Activated T-helper 2 cell treated with anti-CD3 and anti-CD28 coated beads, Interferon-gamma antibody, Interleukin-2, Interleukin-4, amounts not matched to agents 10 μg/mL and 5 μg/mL and 100 μg/mL, durations not matched to agents 14 hours and 24 hours and 36 hours (primary cell): ENCODE measurements at regions of chr6 and their contacts with region 1.

Region 1: DNA sequence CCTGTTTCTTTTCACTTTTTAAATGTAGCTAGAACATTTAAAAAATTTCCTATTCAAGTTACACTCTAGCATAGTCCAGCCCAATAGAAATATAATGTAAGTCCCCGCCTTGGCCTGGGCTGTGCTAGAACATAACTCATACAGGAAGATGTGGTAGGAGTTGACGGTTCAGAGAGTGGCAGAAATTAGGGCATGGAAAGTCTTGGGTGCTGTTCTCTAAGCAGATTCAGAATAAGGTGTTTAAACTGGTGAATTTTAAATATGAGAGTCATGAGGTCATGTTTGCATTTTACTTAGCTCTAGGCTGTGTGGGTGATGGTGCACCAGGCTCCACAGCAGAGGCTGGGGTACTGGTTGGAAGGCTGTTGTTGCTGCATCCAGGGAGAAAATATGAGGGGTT is 256.5 kb downstream of the FARS2 start:
- DNase-seq: no peak
- H3K4me3 Mint-ChIP-seq: peak overlapping the region; percentile 48
- H3K27ac Mint-ChIP-seq: peak overlapping the region; percentile 76
- H3K4me1 Mint-ChIP-seq: peaks cover 48% of the 10 kb centered on the region
- H3K27me3 Mint-ChIP-seq: no peaks in the 10 kb centered on the region

Region 2: DNA sequence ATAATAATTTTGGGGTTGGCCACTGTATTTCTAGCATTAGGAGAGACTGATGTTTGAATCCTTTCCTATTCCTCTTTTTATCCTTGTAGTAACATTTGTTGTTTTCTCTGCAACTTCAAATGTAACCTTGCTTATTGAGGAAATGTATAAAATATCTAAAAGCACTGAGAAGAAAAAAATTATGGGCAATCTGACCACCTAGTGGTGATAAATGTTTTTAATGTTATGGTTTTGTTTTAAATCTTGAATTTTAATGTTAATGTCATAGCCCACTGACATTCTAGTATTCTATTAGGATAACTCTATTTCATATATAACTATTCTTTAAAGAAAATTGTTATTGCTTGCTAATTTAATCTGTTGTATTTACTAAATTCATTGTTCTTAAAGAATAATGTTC is 122.1 kb before region 1 on chr6:
- intact Hi-C with region 1: no loop called
- DNase-seq: no peak
- H3K4me3 Mint-ChIP-seq: no peak overlapping the region
- H3K27ac Mint-ChIP-seq: no peak overlapping the region
- H3K4me1 Mint-ChIP-seq: peaks cover 4% of the 10 kb centered on the region
- H3K27me3 Mint-ChIP-seq: no peaks in the 10 kb centered on the region

Region 3: GRCh38 chr6:5497896-5498578 is 19.8 kb before region 1 on chr6:
- intact Hi-C with region 1: loop called (anchors 2 kb)
- DNase-seq: no peak
- H3K4me3 Mint-ChIP-seq: peak overlapping the region; percentile 43
- H3K27ac Mint-ChIP-seq: peak overlapping the region; percentile 59
- H3K4me1 Mint-ChIP-seq: peaks cover 33% of the 10 kb centered on the region
- H3K27me3 Mint-ChIP-seq: no peaks in the 10 kb centered on the region

Region 4: DNA sequence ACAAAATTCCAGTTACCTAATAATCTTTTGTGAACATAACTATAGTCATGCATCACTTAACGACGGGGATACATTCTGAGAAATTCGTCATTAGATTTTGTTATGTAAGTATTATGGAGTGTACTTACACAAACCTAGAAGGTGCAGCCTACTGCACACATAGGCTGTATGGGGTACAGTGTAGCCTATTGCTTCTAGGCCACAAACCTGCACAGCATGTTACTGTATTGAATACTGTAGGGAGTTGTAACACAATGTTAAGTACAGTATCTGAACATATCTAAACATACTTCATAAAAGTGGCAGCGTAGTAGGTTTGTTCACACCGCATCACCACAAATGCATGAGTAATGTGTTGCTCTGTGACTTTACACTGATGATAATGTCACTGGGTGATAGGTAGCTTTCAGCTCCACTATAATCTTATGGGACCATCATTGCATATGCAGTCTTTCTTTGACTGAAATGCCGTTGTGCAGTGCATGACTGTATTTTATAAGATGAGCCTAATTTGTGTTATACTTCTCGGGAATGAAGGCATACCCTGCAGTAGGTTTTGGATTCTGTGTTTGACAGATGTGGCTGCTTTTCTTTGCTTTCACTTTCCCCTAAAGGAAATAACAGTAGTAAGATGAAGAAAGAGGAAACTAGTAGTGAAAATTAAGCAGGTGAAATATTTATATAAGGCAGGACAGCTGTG is 109.1 kb after region 1 on chr6:
- intact Hi-C with region 1: loop called (anchors 1 kb)
- DNase-seq: no peak
- H3K4me3 Mint-ChIP-seq: peak overlapping the region; percentile 49
- H3K27ac Mint-ChIP-seq: peak overlapping the region; percentile 72
- H3K4me1 Mint-ChIP-seq: peaks cover 16% of the 10 kb centered on the region
- H3K27me3 Mint-ChIP-seq: no peaks in the 10 kb centered on the region